ENCODE measurements at regions of chr3 and their contacts with region 1.

Region 1: DNA sequence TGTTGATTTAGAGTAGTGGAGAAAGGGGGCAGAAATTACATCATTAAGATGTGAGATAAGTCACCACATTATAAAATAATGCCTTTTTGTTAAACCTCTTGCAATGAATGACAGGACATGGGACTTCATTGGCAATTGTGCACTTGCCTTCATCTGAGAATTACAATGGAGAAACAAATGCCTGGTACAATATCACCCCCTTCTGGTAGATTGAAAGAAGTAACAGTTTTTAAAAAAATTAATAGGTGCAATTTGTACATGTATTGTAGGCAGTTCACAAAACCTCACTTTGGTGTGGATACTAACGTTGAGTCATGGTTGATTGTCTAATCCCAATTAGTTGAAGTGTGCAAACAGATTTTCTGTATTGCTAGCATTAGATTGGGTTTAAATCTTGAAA is 4.6 kb upstream of the P2RY14 start:
- DNase-seq: no peak
- ATAC-seq: peak; percentile 57
- H3K4me3 Mint-ChIP-seq: no peak overlapping the region
- H3K27ac Mint-ChIP-seq: no peak overlapping the region
- H3K4me1 Mint-ChIP-seq: peaks cover 29% of the 10 kb centered on the region
- H3K27me3 Mint-ChIP-seq: no peaks in the 10 kb centered on the region

Region 2: DNA sequence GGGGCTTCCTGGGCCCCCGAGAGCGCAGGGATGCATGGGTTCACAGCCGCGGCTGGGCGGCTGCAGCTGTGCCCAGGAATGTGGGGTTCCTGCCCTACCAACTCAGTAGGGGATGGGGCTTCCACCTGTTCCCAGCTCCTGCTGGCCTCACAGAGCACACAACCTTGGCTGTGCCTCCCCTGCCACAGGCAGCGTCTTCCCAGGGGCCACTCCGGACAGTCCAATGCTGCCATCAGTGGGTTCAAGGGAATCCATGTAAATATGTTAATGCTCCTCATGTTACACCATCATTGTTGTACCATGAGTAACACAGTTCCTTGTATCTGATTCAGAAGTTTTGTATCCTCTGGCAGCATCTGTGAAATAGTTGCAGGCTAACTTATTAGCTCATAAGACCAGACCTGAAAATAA is 507.8 kb before region 1 on chr3:
- CTCF ChIA-PET with region 1: no interaction called
- POLR2A ChIA-PET with region 1: no interaction called
- intact Hi-C with region 1: no loop called
- DNase-seq: no peak
- ATAC-seq: no peak
- H3K4me3 Mint-ChIP-seq: no peak overlapping the region
- H3K27ac Mint-ChIP-seq: no peak overlapping the region
- H3K4me1 Mint-ChIP-seq: no peaks in the 10 kb centered on the region
- H3K27me3 Mint-ChIP-seq: no peaks in the 10 kb centered on the region

Region 3: DNA sequence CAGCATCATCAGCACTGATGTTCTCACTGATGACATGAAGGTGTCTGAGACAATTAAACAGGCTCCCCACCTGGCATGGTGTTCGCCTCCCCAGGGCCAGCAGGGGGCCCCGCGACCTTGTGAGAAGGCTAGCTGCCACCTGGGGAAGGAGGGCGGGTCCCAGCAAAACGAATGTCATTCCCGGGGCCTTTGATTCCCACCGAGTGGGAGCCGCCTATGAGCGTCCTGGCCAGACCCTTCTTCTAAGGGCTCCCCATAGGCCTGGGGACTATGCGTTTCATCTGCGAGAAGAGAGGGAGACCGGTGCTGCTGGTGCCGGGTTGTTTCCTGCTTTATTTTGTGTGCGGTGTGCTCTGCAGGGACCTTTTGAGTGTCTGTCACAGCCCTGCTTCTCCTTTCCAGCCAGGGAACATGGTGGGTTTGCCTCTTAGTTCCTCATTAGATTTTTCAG is 357.1 kb before region 1 on chr3:
- CTCF ChIA-PET with region 1: interaction called, 4 read pairs
- POLR2A ChIA-PET with region 1: no interaction called
- intact Hi-C with region 1: loop called in 1 of 2 experiments (anchors 5 kb)
- DNase-seq: peak; percentile 80
- ATAC-seq: peak; percentile 93
- H3K4me3 Mint-ChIP-seq: peak overlapping the region; percentile 19
- H3K27ac Mint-ChIP-seq: no peak overlapping the region
- H3K4me1 Mint-ChIP-seq: no peaks in the 10 kb centered on the region
- H3K27me3 Mint-ChIP-seq: peaks cover 7% of the 10 kb centered on the region

Region 4: DNA sequence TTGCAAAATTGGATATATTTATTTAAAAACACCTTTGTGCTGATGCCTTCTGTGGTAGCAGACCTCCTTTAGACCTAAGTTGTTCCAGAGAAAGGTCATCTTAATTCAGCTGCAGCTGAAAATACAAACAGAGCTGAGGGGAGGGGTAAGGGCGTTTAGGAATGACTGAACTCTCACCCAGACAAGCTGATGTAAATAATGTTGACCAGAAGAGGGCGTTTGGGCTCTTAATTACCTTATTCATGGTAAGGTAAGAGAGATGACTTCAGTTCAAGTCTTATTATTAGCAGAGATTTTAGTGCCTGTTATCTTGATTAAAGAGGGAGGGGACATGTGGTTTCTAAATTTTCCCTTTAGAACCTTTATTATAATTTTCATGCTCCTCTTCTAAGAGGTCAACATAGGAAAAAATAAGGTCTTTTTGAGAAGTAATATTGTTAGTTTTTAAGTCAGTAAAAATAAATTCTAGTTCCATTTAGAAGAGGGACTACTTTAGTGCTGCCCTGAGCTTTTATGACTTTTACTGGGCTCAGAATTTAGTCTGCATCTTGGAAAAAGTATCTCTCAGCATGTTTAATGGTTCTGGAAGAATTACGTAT is 126.2 kb before region 1 on chr3:
- CTCF ChIA-PET with region 1: interaction called, 7 read pairs
- POLR2A ChIA-PET with region 1: no interaction called
- intact Hi-C with region 1: loop called in 1 of 2 experiments (anchors 1 kb)
- DNase-seq: peak; percentile 46
- ATAC-seq: peak; percentile 92
- H3K4me3 Mint-ChIP-seq: no peak overlapping the region
- H3K27ac Mint-ChIP-seq: no peak overlapping the region
- H3K4me1 Mint-ChIP-seq: no peaks in the 10 kb centered on the region
- H3K27me3 Mint-ChIP-seq: peaks cover 4% of the 10 kb centered on the region

Region 5: DNA sequence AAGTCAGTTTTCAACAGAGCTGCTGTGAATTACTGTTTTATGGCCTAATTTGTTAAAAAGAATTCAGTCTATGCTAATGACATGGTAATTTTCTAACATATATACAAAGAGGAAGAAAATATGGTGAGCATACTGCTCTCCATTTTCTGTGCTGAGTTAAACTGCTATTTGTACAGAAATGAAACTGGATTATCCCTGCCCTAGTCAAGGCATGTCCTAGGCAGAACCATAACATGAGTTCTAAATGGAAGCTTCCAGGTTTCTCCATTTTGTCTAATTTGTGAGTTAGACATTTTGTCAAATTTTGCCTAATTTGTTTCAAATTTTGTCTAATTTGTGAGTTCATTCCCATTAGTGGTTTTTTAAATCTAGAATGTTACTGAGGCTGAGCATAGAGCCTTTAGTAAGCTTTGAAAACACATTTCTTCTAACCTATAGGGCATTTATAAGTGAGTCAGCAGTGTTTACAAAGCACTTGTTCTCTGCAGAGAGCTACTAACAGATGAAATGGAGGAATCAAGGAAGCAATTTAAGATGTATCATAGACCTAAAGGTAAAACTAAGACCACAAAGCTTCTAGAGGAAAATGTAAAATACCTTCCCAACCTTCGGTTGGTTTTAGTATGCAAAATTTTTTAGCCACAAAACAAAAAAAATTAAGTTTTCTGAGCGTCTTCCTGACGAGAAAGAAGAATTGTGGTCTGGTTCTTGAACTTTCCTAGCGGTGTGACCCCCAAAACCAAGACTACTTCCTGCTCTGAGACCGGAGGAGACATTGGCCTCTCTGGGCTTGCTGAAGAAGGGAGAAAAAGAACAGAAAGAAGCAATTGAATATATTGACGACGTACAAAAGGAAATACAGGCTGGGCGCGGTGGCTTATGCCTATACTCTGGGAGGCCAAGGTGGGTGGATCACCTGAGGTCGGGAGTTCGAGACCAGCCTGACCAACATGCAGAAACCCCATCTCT is 14.4 kb before region 1 on chr3:
- CTCF ChIA-PET with region 1: interaction called, 15 read pairs
- POLR2A ChIA-PET with region 1: interaction called, 3 read pairs
- intact Hi-C with region 1: no loop called
- DNase-seq: peak; percentile 56
- ATAC-seq: peak; percentile 86
- H3K4me3 Mint-ChIP-seq: peak overlapping the region; percentile 13
- H3K27ac Mint-ChIP-seq: peak overlapping the region; percentile 53
- H3K4me1 Mint-ChIP-seq: peaks cover 11% of the 10 kb centered on the region
- H3K27me3 Mint-ChIP-seq: no peaks in the 10 kb centered on the region